Activated CD4-positive, alpha-beta T cell treated with anti-CD3 and anti-CD28 coated beads, Interleukin-2, amount 10 ng/mL, durations not matched to agents 24 days and 14 days (primary cell): ENCODE measurements at regions of chr7 and their contacts with region 1.

Region 1: GRCh38 chr7:134986363-134987251 is at the start of gene AGBL3:
- DNase-seq: peak; percentile 97
- H3K4me3 Mint-ChIP-seq: peak within 1 kb of the TSS; percentile 97
- H3K27ac Mint-ChIP-seq: peak within 1 kb of the TSS; percentile 95
- H3K4me1 Mint-ChIP-seq: peaks cover 31% of the 10 kb centered on the region
- H3K27me3 Mint-ChIP-seq: no peaks in the 10 kb centered on the region
- total RNA-seq, gene AGBL3: 2.0 and 3.4 TPM in 2 replicates

Region 2: DNA sequence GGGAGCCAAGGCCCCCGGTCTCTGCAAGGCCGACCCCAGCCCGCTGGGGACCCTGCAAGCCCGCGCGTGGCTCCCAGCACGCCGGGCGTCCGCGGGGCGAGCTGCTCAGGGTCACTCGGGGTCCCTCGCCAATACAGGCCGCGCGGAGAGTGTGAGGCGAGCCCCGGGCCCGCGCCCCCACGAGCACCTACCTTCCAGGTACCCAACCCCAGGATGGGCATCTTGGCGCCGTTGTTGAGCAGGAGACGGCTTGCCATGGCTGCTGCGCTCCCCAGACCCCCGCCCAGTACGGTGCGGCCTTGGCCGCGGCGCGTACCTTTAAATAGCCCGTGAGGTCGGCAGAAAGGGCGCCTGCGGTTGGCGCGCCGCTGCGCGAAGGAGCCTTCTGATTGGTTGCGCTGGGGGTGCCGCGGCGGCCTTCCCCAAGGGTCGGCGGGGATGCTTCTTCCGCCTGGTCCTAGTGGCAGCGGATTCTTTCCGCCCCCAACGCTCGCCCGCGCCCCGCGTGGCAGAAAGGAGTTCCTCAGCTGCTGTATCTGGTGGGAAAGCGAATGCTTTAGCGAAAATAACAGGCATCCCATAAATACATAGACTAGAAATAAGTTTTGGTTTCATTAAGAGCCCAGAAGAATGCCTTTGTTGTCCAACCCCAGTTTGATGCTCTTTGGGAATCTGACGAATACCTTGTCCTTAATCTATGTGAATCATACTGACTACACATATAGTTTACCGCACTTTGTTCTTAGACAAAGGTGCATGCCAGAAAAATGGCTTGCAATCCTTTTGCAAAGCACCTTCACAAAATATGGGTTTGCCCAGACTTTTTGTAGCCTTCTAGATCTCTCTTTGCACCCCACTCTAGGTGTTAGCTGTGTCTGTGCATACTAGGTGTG is 527.6 kb before region 1 on chr7 and contains the start of gene AKR1B1:
- intact Hi-C with region 1: loop called (anchors 1 kb)
- DNase-seq: peak; percentile 97
- H3K4me3 Mint-ChIP-seq: peak within 1 kb of the TSS; percentile 90
- H3K27ac Mint-ChIP-seq: peak within 1 kb of the TSS; percentile 83
- H3K4me1 Mint-ChIP-seq: peaks cover 39% of the 10 kb centered on the region
- H3K27me3 Mint-ChIP-seq: no peaks in the 10 kb centered on the region
- total RNA-seq, gene AKR1B1: 107 TPM in 2 replicates

Region 3: DNA sequence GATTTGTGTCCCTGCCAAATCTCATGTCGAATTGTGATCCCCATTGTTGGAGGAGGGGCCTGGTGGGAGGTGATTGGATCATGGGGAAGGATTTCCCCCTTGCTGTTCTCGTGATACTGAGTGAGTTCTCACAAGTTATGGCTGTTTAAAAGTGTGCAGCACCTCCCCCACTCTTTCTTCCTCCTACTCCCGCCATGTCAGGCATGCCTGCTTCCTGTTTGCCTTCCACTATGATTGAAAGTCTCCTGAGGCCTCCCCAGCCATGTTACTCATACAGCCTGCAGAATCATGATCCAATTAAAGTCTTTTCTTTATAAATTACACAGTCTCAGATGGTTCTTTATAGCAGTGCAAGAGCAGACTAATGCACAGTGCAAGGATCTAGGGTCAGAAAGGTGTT is 131.8 kb before region 1 on chr7:
- intact Hi-C with region 1: loop called (anchors 5 kb)
- DNase-seq: no peak
- H3K4me3 Mint-ChIP-seq: peak overlapping the region; percentile 30
- H3K27ac Mint-ChIP-seq: peak overlapping the region; percentile 22
- H3K4me1 Mint-ChIP-seq: peaks cover 31% of the 10 kb centered on the region
- H3K27me3 Mint-ChIP-seq: no peaks in the 10 kb centered on the region

Region 4: GRCh38 chr7:135147899-135148721 is 161.5 kb after region 1 on chr7 and contains the start of gene TMEM140:
- intact Hi-C with region 1: loop called (anchors 1 kb)
- DNase-seq: peak; percentile 92
- H3K4me3 Mint-ChIP-seq: peak within 1 kb of the TSS; percentile 91
- H3K27ac Mint-ChIP-seq: peak within 1 kb of the TSS; percentile 95
- H3K4me1 Mint-ChIP-seq: peaks cover 54% of the 10 kb centered on the region
- H3K27me3 Mint-ChIP-seq: no peaks in the 10 kb centered on the region
- total RNA-seq, gene TMEM140: 2.2 TPM in 2 replicates

Region 5: GRCh38 chr7:135211179-135211945 is 224.8 kb after region 1 on chr7 and contains the start of gene WDR91:
- intact Hi-C with region 1: loop called (anchors 1 kb)
- DNase-seq: peak; percentile 96
- H3K4me3 Mint-ChIP-seq: peak within 1 kb of the TSS; percentile 95
- H3K27ac Mint-ChIP-seq: peak within 1 kb of the TSS; percentile 98
- H3K4me1 Mint-ChIP-seq: peaks cover 29% of the 10 kb centered on the region
- H3K27me3 Mint-ChIP-seq: no peaks in the 10 kb centered on the region
- total RNA-seq, gene WDR91: 25.8 and 26.6 TPM in 2 replicates